ENCODE measurements at regions of chr6 and their contacts with region 1.

Region 1: GRCh38 chr6:110958329-110959192 is at the start of gene GTF3C6:
- DNase-seq: peak; percentile 92 to 94
- ATAC-seq: peak; percentile 98 to 100 (median 99)
- H3K4me3 ChIP-seq: peak within 1 kb of the TSS; percentile 55 to 91 (median 83)
- H3K27ac ChIP-seq: peak within 1 kb of the TSS; percentile 46 to 97 (median 90)
- H3K4me1 ChIP-seq: peaks cover 0 to 24% (median 13%) of the 10 kb centered on the region in 9 donors
- H3K27me3 ChIP-seq: no peaks in the 10 kb centered on the region
- CTCF ChIP-seq: peak in 1 of 9 donors; percentile 6
- total RNA-seq, gene GTF3C6: 96.0 to 128 (median 107) TPM

Region 2: DNA sequence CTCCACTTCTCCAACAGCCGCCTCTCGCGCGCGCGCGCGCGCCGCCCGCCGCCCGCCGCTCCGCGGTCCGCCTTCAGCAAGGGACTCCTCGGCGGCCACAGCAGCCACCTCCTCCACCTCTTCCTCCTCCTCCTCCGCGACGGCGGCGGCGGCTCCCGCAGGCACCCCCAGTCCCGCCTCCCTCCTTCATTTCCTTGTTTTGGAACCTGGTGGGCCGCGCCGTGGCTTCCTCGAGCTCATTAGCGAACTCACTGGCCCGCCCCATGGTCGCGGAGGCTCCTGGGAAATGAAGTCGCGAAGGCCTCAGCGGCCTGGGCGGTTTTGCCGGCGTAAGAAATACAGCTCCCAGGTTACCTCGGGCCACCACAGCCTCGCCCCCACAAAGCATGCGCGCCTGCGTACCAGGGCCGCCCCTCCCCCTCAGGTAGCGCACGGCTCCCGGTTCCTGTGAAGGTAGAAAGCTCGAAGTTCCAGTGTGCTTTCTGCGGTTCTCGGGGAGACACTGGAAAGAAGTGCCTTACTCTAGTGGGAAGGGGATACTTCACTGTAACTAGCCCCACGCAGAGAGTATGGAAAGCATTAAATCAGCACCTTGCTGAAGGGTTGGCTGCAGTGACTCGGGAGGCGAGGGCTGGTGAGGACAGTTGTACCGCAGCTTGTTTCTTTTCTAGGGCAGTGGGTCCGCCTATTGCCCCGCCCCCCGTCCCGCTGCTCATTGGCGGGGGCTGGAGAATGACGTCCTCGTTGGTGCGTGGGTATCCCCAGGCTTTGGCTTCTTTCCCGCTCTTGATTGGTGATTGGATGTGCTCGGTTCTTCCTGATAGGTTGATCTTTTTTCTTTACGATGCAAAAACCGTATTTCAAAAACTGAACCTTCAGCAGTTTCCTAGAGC is 143.1 kb before region 1 on chr6 and contains the start of gene CDK19:
- intact Hi-C with region 1: loop called in 5 of 10 experiments (anchors 5 to 10 kb)
- DNase-seq: peak; percentile 97 to 98
- ATAC-seq: peak; percentile 96 to 99 (median 98)
- H3K4me3 ChIP-seq: peak within 1 kb of the TSS; percentile 70 to 97 (median 88)
- H3K27ac ChIP-seq: peak within 1 kb of the TSS; percentile 87 to 96 (median 94)
- H3K4me1 ChIP-seq: peaks cover 0 to 45% (median 16%) of the 10 kb centered on the region in 9 donors
- H3K27me3 ChIP-seq: no peaks in the 10 kb centered on the region
- CTCF ChIP-seq: no peak
- total RNA-seq, gene CDK19: 4.6 to 13.0 (median 8.7) TPM

Region 3: GRCh38 chr6:110831405-110831804 is 127.2 kb before region 1 on chr6:
- intact Hi-C with region 1: no loop called
- DNase-seq: no peak
- ATAC-seq: no peak
- H3K4me3 ChIP-seq: no peak overlapping the region
- H3K27ac ChIP-seq: no peak overlapping the region
- H3K4me1 ChIP-seq: peaks cover 0 to 6% (median 0%) of the 10 kb centered on the region in 9 donors
- H3K27me3 ChIP-seq: no peaks in the 10 kb centered on the region
- CTCF ChIP-seq: no peak

Region 4: DNA sequence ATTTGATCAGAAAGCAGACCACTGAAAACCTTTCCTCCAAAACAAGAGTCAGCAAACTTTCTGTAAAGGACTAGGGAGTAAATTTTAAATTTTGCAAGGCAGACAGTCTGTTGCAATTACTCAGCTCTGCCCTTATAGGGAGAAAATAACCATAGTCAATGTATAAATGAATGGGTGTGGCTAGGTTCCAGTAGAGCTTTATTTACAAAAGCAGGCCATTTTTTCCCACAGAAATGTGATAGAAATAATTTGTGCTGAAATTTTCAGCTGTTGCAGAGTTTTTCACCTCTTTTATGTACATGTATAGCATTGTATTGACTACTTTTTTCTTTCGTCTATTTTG is 76.3 kb before region 1 on chr6:
- intact Hi-C with region 1: loop called in 4 of 10 experiments (anchors 5 to 10 kb)
- DNase-seq: no peak
- ATAC-seq: no peak
- H3K4me3 ChIP-seq: peak overlapping the region in 3 of 10 donors; percentile 2 to 90 (median 5)
- H3K27ac ChIP-seq: peak overlapping the region in 6 of 10 donors; percentile 41 to 65 (median 59)
- H3K4me1 ChIP-seq: peaks cover 4 to 96% (median 78%) of the 10 kb centered on the region in 9 donors
- H3K27me3 ChIP-seq: no peaks in the 10 kb centered on the region
- CTCF ChIP-seq: no peak

Region 5: GRCh38 chr6:110981202-110981600 is 22.6 kb after region 1 on chr6:
- intact Hi-C with region 1: loop called in 2 of 10 experiments (anchors 2 kb)
- DNase-seq: no peak
- ATAC-seq: peak in 3 of 8 donors; percentile 2 to 16 (median 9)
- H3K4me3 ChIP-seq: peak overlapping the region; percentile 77 to 94 (median 82)
- H3K27ac ChIP-seq: peak overlapping the region in 9 of 10 donors; percentile 87 to 96 (median 93)
- H3K4me1 ChIP-seq: peaks cover 0 to 21% (median 13%) of the 10 kb centered on the region in 9 donors
- H3K27me3 ChIP-seq: no peaks in the 10 kb centered on the region
- CTCF ChIP-seq: no peak

Region 6: DNA sequence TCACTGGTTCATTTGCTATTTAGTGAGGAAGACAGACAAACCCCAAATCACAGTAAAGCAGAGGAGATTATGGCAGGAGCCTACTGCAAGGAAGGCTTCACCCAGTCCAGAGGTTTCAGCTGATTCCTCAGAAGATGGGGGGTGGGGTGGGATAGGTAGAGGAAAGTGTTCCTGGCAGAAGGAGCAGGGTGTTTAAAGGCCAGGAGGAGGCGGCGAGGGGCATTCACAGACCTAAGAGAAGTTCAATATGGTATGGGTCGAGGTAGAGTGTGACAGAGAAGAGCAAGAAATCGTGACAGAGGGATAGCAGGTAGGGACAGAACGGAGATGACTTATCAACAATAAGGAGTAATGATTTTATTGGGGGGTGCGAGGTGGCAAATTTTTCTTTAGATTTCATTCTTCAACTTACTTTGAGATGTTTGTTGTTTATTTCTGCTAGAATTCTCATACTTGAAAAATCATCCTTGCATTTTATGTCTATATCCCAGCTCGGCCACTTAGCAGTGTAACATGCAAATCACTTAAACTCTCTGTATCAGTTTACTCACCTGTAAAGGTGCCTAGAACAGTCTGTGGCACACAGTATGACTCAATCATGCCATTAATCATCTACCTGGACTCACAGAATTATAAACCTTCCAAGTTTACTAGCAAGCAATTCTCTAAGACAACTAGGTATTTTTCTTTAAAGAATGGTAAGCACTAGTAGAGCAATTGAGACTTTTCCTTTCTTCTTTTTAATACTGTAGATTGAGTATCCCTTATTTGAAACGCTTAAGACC is 347.7 kb after region 1 on chr6:
- intact Hi-C with region 1: no loop called
- DNase-seq: no peak
- ATAC-seq: no peak
- H3K4me3 ChIP-seq: no peak overlapping the region
- H3K27ac ChIP-seq: no peak overlapping the region
- H3K4me1 ChIP-seq: peaks cover 0 to 6% (median 0%) of the 10 kb centered on the region in 9 donors
- H3K27me3 ChIP-seq: no peaks in the 10 kb centered on the region
- CTCF ChIP-seq: no peak

Measured in heart right ventricle (tissue), 16 donors.